IMR-90 (cell line): ENCODE measurements at regions of chr14 and their contacts with region 1.

Region 1: DNA sequence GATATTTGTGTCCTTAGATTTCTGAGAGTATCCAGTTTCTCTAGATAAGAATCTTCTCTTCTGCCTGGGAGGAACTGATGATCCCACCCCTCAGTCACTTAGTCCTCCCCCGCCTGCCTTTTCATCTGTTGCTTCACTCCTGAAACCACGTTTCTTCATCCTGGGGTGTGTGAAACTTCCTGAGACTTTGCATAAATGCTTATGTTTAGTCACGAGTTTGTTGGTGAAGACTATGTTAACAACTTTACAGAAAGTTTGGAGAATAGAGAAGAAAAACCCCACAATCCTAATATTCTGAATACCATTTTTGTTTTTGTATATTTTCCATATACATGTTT is 33.2 kb downstream of the MARK3 start:
- DNase-seq: peak; percentile 87
- ATAC-seq: peak; percentile 63
- H3K4me3 ChIP-seq: no peak overlapping the region
- H3K27ac ChIP-seq: no peak overlapping the region; the same call in 1 of the 2 replicates
- H3K4me1 ChIP-seq: peaks cover 15% of the 10 kb centered on the region
- H3K27me3 ChIP-seq: no peaks in the 10 kb centered on the region
- CTCF ChIP-seq: no peak
- POLR2A ChIP-seq: no peak
- RAD21 ChIP-seq: no peak

Region 2: DNA sequence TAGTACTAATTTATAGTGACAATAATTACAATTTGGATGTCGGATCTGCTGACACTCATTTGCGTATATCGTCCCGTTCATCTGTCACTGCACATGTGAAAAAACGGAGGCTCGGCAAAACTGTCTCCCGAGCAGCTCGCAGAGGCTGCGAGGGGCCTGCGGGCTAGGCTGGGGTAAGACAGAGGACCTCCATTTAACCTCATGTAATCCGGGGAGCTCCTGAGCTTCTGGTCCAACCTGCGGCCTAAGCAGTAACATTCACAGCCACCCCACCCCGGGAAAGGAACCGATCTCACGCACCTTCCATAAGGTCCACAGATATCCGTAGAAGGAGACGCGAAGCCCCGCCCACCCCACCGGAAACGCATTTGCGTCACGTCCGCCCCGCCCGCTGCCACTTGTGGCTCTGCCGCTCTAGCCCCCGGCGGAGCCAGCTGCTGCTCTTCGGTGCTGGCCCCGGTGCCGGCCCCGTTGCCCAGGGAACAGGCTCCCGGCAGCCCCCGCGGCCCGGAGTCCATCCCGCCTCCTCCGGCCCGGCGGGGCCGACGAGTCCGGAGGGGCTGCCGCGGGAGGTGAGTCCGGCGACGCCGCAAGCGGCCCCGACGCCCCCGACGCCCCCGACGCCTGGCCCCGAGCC is 1055.8 kb before region 1 on chr14 and contains the starts of genes CINP and TECPR2:
- CTCF ChIA-PET with region 1: no interaction called
- POLR2A ChIA-PET with region 1: no interaction called
- dilution Hi-C with region 1: no loop called
- in situ Hi-C with region 1: no loop called
- intact Hi-C with region 1: no loop called
- DNase-seq: peak; percentile 93
- ATAC-seq: peak; percentile 95
- H3K4me3 ChIP-seq: peak within 1 kb of the TSS; percentile 90
- H3K27ac ChIP-seq: peak within 1 kb of the TSS; percentile 81
- H3K4me1 ChIP-seq: peaks cover 7% of the 10 kb centered on the region
- H3K27me3 ChIP-seq: no peaks in the 10 kb centered on the region
- CTCF ChIP-seq: no peak
- POLR2A ChIP-seq: peak; percentile 93
- RAD21 ChIP-seq: no peak
- total RNA-seq, gene CINP: 41.9 and 55.3 TPM in 2 replicates
- total RNA-seq, gene TECPR2: 10.3 and 11.7 TPM in 2 replicates

Region 3: GRCh38 chr14:103401223-103402214 is 16.9 kb before region 1 on chr14:
- CTCF ChIA-PET with region 1: interaction called, 3 read pairs
- POLR2A ChIA-PET with region 1: no interaction called
- dilution Hi-C with region 1: no loop called
- in situ Hi-C with region 1: no loop called
- intact Hi-C with region 1: loop called (anchors 2 kb)
- DNase-seq: peak; percentile 87
- ATAC-seq: peak; percentile 89
- H3K4me3 ChIP-seq: no peak overlapping the region
- H3K27ac ChIP-seq: peak overlapping the region; percentile 42; the same call in 1 of the 2 replicates
- H3K4me1 ChIP-seq: peaks cover 16% of the 10 kb centered on the region
- H3K27me3 ChIP-seq: no peaks in the 10 kb centered on the region
- CTCF ChIP-seq: no peak
- POLR2A ChIP-seq: no peak
- RAD21 ChIP-seq: no peak

Region 4: DNA sequence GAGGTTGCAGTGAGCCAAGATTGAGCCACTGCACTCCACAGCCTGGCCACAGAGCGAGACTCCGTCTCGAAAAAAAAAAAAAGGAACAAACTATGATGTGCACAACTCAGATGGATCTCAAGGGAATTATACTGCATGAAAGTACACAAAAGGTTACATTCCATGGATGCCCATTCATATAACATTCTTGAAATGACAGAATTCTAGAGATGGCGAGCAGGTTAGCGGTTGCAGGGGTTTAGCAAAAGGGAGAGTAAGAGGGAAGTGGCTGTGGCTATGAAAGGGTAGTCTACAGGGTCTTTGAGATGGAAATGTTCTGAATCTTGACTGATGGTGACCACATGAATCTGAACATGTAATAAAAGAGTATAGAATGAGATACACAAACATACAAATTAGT is 54.5 kb after region 1 on chr14:
- CTCF ChIA-PET with region 1: no interaction called
- POLR2A ChIA-PET with region 1: interaction called, 11 read pairs
- dilution Hi-C with region 1: no loop called
- in situ Hi-C with region 1: no loop called
- intact Hi-C with region 1: no loop called
- DNase-seq: no peak
- ATAC-seq: no peak
- H3K4me3 ChIP-seq: no peak overlapping the region
- H3K27ac ChIP-seq: no peak overlapping the region
- H3K4me1 ChIP-seq: peaks cover 2% of the 10 kb centered on the region; the same call in 1 of the 2 replicates
- H3K27me3 ChIP-seq: no peaks in the 10 kb centered on the region
- CTCF ChIP-seq: no peak
- POLR2A ChIP-seq: no peak
- RAD21 ChIP-seq: no peak